Ovary (tissue), 10 donors: ENCODE measurements at regions of chr19 and their contacts with region 1.

Region 1: DNA sequence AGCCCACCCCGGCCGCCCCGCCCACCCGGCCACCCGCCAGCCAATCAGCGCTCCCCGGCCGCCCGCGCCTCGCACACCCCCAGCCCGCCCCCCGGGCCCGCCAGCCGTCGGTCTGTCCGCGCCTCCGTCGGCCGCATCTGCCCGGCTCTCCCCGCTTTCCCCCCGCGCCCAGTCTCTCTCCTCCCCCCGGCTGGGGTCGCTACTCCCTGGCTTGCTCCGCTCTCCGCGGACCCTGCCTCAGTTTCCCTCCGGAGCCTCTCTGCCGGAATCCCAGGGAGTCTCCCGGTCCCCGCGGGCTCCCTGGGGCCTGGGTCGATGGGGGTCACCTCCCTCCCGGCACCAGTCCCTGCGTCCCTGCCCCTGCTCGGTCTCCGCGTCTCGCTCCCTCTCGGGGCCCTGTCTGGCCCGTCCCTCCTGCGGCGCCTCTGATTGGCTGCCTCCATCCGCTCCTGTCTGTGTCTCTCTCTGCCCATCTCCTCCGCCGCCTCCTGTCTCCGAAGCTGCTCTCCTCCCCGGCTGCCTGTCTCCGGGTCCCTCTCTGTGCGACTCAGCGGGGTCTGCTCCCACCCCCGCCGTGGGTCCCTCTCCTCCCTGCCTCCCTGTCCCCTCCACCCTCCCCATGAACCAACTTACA is 475 bp downstream of the IL11 start:
- DNase-seq: no peak
- H3K4me3 ChIP-seq: no peak overlapping the region
- H3K27ac ChIP-seq: no peak overlapping the region
- H3K4me1 ChIP-seq: no peaks in the 10 kb centered on the region
- H3K27me3 ChIP-seq: peaks cover 2% of the 10 kb centered on the region
- CTCF ChIP-seq: no peak
- EP300 ChIP-seq: no peak
- POLR2A ChIP-seq: no peak

Region 2: GRCh38 chr19:54137086-54137921 is 1232.5 kb before region 1 on chr19 and contains the start of gene CNOT3:
- intact Hi-C with region 1: no loop called
- DNase-seq: peak; percentile 99
- H3K4me3 ChIP-seq: peak within 1 kb of the TSS; percentile 100
- H3K27ac ChIP-seq: peak within 1 kb of the TSS; percentile 77 to 87
- H3K4me1 ChIP-seq: peaks cover 4% of the 10 kb centered on the region
- H3K27me3 ChIP-seq: no peaks in the 10 kb centered on the region
- CTCF ChIP-seq: no peak
- EP300 ChIP-seq: peak; percentile 9
- POLR2A ChIP-seq: peak; percentile 81
- total RNA-seq, gene CNOT3: 14.4 to 44.8 (median 41.6) TPM

Region 3: DNA sequence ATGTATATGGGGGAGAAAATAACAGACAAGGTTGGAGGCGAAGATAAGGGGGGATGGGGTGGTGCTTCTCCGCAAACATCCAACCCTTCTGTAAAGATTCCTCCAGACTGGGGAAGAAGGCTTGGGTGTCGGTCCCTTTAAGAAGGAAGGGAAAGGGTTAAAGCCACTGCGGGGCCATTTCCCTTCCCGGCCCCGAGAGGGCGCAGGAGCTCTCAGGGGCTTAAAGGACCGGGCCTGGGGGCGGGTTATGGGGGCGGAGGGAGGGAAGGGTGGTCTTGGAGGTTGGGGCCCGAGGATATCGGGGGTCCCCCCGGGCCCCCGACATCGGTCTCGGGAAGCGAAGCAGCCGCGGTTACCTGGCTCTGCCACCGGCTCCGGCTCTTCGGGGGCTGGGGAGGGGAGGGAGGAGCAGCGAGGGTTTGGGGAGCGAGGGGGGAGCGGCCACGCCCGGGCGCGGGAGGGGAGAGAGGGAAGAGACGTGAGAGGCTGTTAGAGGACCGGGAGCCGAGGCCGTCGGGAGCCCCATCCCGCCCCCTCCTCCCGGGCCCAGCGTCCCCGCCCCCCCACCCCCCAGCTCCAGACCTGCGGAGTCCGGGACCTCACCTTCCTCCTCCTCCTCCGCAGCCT is 223.6 kb before region 1 on chr19:
- intact Hi-C with region 1: loop called in 1 of 4 experiments (anchors 10 kb)
- DNase-seq: no peak
- H3K4me3 ChIP-seq: no peak overlapping the region
- H3K27ac ChIP-seq: no peak overlapping the region
- H3K4me1 ChIP-seq: no peaks in the 10 kb centered on the region
- H3K27me3 ChIP-seq: peaks cover 5% of the 10 kb centered on the region
- CTCF ChIP-seq: no peak
- EP300 ChIP-seq: no peak
- POLR2A ChIP-seq: no peak

Region 4: DNA sequence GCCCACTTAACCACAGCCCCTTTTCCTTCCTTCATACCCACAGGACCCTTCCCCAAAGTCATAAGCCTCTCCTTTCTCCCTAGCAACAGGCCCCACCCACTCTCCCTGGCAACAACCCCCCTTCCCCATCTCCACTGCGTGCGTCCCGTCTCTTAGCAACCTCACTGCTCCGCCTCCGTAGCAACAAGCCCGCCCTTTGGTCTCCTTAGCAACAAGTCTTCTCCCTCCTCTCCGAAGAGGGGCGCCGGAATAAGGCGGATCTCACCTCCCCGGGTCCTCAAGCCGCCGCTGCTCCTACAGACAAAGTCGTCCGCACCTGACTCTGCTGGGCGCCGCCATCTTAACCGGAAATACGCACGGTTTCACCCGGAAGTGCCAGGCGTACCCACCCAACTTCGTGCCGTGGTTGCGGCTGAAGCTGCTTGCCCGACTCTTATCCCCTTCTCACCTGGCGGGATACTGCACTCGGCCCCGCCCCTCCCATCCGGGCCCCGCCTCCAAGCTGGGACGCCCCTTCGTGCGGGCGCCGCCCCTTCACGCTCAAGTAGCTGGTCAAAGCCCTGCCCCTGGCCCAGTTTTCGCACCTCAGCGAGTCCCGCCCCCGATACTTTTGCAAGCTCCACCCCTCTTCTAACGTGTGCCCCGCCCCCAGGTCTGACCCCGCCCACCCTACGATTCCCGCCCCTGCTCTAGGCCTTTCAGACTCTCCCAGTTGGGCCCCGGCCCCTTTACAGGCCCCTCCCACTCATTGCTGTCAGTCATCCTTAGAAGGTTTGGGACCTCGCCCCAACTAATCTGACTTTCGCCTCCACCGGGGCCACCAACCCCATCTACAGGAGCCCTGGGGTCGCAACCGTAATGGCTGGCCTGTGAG is 89.8 kb before region 1 on chr19 and contains the start of gene HSPBP1:
- intact Hi-C with region 1: loop called in 1 of 4 experiments (anchors 10 kb)
- DNase-seq: peak; percentile 92 to 97 (median 95)
- H3K4me3 ChIP-seq: peak within 1 kb of the TSS; percentile 77
- H3K27ac ChIP-seq: peak within 1 kb of the TSS; percentile 53 to 73
- H3K4me1 ChIP-seq: peaks cover 5% of the 10 kb centered on the region
- H3K27me3 ChIP-seq: no peaks in the 10 kb centered on the region
- CTCF ChIP-seq: peak in 1 of 3 donors; percentile 13
- EP300 ChIP-seq: no peak
- POLR2A ChIP-seq: peak; percentile 40
- total RNA-seq, gene HSPBP1: 20.5 to 40.7 (median 31.8) TPM

Region 5: DNA sequence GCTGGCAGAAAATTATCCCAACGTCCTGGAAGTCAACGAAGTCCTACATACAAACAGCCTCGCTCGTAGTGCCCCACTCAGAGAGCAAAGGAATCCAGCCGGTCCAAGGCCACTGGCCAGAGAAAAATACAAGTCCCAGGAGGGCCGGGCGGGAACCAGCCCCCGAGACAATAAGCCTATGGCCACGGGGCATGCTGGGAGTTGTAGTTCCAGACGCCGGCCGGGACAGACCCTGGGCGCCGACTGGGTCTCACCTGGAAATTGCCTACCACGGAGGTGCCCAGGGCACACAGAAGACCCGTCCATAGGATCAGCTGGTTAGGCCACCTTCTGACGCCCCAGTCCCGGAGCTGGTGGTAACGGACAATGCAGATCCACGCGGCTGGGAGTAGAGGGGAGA is 50.0 kb before region 1 on chr19:
- intact Hi-C with region 1: no loop called
- DNase-seq: peak in 4 of 5 donors; percentile 36 to 75 (median 56)
- H3K4me3 ChIP-seq: no peak overlapping the region
- H3K27ac ChIP-seq: no peak overlapping the region
- H3K4me1 ChIP-seq: no peaks in the 10 kb centered on the region
- H3K27me3 ChIP-seq: no peaks in the 10 kb centered on the region
- CTCF ChIP-seq: no peak
- EP300 ChIP-seq: no peak
- POLR2A ChIP-seq: no peak

Region 6: GRCh38 chr19:55461259-55461973 is 91.6 kb after region 1 on chr19 and contains the start of gene ISOC2:
- intact Hi-C with region 1: no loop called
- DNase-seq: peak; percentile 100
- H3K4me3 ChIP-seq: peak within 1 kb of the TSS; percentile 60
- H3K27ac ChIP-seq: peak within 1 kb of the TSS; percentile 64 to 72
- H3K4me1 ChIP-seq: no peaks in the 10 kb centered on the region
- H3K27me3 ChIP-seq: no peaks in the 10 kb centered on the region
- CTCF ChIP-seq: no peak
- EP300 ChIP-seq: peak; percentile 12
- POLR2A ChIP-seq: peak; percentile 82
- total RNA-seq, gene ISOC2: 21.8 to 39.2 (median 31.7) TPM